Natural killer cell (primary cell): ENCODE measurements at regions of chr22 and their contacts with region 1.

Region 1: DNA sequence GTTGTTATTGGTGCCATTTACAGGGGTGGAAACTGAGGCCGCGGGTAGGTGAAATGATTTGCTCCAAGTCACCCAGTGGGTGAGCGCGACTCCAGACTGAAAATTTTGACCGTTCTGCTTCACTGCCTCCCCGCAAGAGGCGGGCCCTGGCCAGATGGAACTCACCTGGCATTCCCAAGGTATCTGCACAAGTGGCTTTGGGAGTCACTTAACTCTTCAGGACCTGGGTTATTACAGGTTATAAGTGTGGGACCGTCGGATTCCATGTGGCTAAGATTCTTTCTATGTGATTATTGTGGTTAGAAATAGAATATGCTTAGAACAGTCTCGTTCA is 598 bp downstream of the CABIN1 start:
- DNase-seq: no peak
- ATAC-seq: no peak
- H3K4me3 ChIP-seq: peak overlapping the region; percentile 99
- H3K4me3 Mint-ChIP-seq: peak overlapping the region; percentile 97
- H3K27ac ChIP-seq: peak overlapping the region; percentile 91
- H3K27ac Mint-ChIP-seq: peak overlapping the region; percentile 93 to 95
- H3K4me1 ChIP-seq: peaks cover 13% of the 10 kb centered on the region
- H3K4me1 Mint-ChIP-seq: peaks cover 27 to 28% of the 10 kb centered on the region in 2 donors
- H3K27me3 ChIP-seq: no peaks in the 10 kb centered on the region
- H3K27me3 Mint-ChIP-seq: no peaks in the 10 kb centered on the region
- CTCF ChIP-seq: no peak

Region 2: GRCh38 chr22:23715806-23716375 is 295.8 kb before region 1 on chr22:
- intact Hi-C with region 1: no loop called
- DNase-seq: no peak
- ATAC-seq: peak in 1 of 3 donors; percentile 10
- H3K4me3 ChIP-seq: peak overlapping the region; percentile 79
- H3K4me3 Mint-ChIP-seq: peak overlapping the region; percentile 82
- H3K27ac ChIP-seq: no peak overlapping the region
- H3K27ac Mint-ChIP-seq: peak overlapping the region; percentile 75 to 88
- H3K4me1 ChIP-seq: peaks cover 25% of the 10 kb centered on the region
- H3K4me1 Mint-ChIP-seq: peaks cover 19 to 30% of the 10 kb centered on the region in 2 donors
- H3K27me3 ChIP-seq: no peaks in the 10 kb centered on the region
- H3K27me3 Mint-ChIP-seq: no peaks in the 10 kb centered on the region
- CTCF ChIP-seq: no peak

Region 3: GRCh38 chr22:23750714-23751440 is 260.8 kb before region 1 on chr22 and contains the start of gene ZNF70:
- intact Hi-C with region 1: no loop called
- DNase-seq: peak; percentile 86 to 94
- ATAC-seq: peak; percentile 97 to 99 (median 98)
- H3K4me3 ChIP-seq: peak within 1 kb of the TSS; percentile 58
- H3K4me3 Mint-ChIP-seq: peak within 1 kb of the TSS; percentile 92
- H3K27ac ChIP-seq: peak within 1 kb of the TSS; percentile 75
- H3K27ac Mint-ChIP-seq: peak within 1 kb of the TSS; percentile 82 to 91
- H3K4me1 ChIP-seq: peaks cover 26% of the 10 kb centered on the region
- H3K4me1 Mint-ChIP-seq: peaks cover 20 to 28% of the 10 kb centered on the region in 2 donors
- H3K27me3 ChIP-seq: no peaks in the 10 kb centered on the region
- H3K27me3 Mint-ChIP-seq: no peaks in the 10 kb centered on the region
- CTCF ChIP-seq: no peak
- total RNA-seq, gene ZNF70: 7.4 to 9.1 (median 7.7) TPM

Region 4: GRCh38 chr22:23997092-23997491 is 14.6 kb before region 1 on chr22:
- intact Hi-C with region 1: no loop called
- DNase-seq: peak in 1 of 2 donors; percentile 0
- ATAC-seq: no peak
- H3K4me3 ChIP-seq: no peak overlapping the region
- H3K4me3 Mint-ChIP-seq: no peak overlapping the region
- H3K27ac ChIP-seq: no peak overlapping the region
- H3K27ac Mint-ChIP-seq: no peak overlapping the region
- H3K4me1 ChIP-seq: no peaks in the 10 kb centered on the region
- H3K4me1 Mint-ChIP-seq: no peaks in the 10 kb centered on the region
- H3K27me3 ChIP-seq: no peaks in the 10 kb centered on the region
- H3K27me3 Mint-ChIP-seq: peaks cover 0 to 15% of the 10 kb centered on the region in 2 donors
- CTCF ChIP-seq: no peak

Region 5: DNA sequence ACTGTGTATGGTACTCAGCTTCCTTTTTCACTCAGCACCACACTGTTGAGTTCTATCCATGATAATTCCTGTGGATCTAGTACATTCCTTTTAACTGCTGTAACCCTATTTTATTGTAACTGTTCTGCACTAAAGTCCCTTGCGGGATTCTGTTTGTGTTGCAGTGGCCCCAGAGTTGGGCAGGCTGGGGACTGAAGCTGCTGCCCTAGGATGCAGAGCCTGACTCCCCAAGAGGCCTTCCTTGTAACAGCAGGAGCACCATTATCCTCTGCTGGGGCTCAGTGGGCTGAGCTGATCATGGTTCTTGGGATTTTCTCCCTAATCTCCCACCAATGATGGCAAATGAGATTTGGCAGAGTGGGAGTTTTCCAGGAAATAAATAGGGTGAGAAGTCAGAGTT is 77.1 kb after region 1 on chr22:
- intact Hi-C with region 1: no loop called
- DNase-seq: no peak
- ATAC-seq: no peak
- H3K4me3 ChIP-seq: no peak overlapping the region
- H3K4me3 Mint-ChIP-seq: no peak overlapping the region
- H3K27ac ChIP-seq: no peak overlapping the region
- H3K27ac Mint-ChIP-seq: no peak overlapping the region
- H3K4me1 ChIP-seq: no peaks in the 10 kb centered on the region
- H3K4me1 Mint-ChIP-seq: no peaks in the 10 kb centered on the region
- H3K27me3 ChIP-seq: no peaks in the 10 kb centered on the region
- H3K27me3 Mint-ChIP-seq: no peaks in the 10 kb centered on the region
- CTCF ChIP-seq: no peak

Region 6: GRCh38 chr22:24156913-24157821 is 145.5 kb after region 1 on chr22:
- intact Hi-C with region 1: loop called (anchors 10 kb)
- DNase-seq: peak; percentile 83 to 95
- ATAC-seq: peak; percentile 77 to 90 (median 82)
- H3K4me3 ChIP-seq: peak overlapping the region; percentile 98
- H3K4me3 Mint-ChIP-seq: peak overlapping the region; percentile 94
- H3K27ac ChIP-seq: peak overlapping the region; percentile 65
- H3K27ac Mint-ChIP-seq: peak overlapping the region; percentile 85 to 88
- H3K4me1 ChIP-seq: peaks cover 85% of the 10 kb centered on the region
- H3K4me1 Mint-ChIP-seq: peaks cover 69 to 86% of the 10 kb centered on the region in 2 donors
- H3K27me3 ChIP-seq: no peaks in the 10 kb centered on the region
- H3K27me3 Mint-ChIP-seq: no peaks in the 10 kb centered on the region
- CTCF ChIP-seq: peak; percentile 82